Common myeloid progenitor, CD34-positive (primary cell): ENCODE measurements at regions of chr17 and their contacts with region 1.

Region 1: DNA sequence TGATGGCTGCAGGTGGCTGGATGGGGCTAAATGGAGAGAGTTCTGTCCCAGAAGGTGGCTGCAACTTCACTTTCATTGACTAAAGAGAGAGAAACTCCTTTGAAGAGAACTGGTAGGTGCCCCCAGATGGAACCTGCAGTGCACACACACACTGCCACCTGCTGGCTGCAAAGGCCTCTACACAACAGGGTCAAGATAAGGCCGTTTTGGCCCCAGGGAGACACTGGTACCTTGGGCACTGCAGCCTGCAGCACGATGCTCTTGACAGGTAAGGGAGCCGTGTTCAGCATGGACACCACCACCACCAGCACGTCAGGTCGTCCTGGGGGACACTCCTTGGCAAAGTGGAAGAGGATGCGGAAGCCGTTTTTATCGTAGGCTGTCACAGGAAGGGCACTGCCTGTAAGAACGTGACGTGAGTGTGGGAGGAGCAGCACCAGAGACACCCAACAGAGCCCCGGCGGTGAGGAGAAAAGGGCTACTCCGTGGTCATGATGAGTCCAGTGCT is 22.7 kb downstream of the GGA3 start:
- DNase-seq: peak; percentile 71 to 83 (median 81)
- H3K4me3 ChIP-seq: no peak overlapping the region
- H3K27ac ChIP-seq: no peak overlapping the region
- H3K4me1 ChIP-seq: no peaks in the 10 kb centered on the region
- H3K27me3 ChIP-seq: no peaks in the 10 kb centered on the region

Region 2: DNA sequence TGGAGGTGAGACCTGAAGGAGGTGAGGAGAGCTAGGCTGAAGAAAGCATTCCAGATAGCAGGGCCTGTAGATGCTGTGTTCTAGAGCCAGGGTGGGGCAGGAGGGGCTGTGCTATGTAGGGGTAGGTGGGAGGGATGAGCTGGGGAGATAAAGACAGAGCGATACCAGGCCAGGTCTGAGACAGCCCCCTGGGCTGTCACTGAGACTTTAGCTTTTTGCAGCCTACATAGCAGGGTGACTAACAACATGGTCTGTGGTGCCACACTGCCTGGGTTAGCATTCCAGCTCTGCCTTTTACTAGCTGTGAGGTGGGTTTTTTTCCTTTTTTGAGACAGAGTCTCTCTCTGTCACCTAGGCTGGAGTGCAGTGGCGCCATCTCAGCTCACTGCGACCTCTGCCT is 18.9 kb before region 1 on chr17:
- CTCF ChIA-PET with region 1: interaction called, 20 read pairs
- POLR2A ChIA-PET with region 1: interaction called, 6 read pairs
- DNase-seq: no peak
- H3K4me3 ChIP-seq: no peak overlapping the region
- H3K27ac ChIP-seq: no peak overlapping the region
- H3K4me1 ChIP-seq: no peaks in the 10 kb centered on the region
- H3K27me3 ChIP-seq: no peaks in the 10 kb centered on the region

Region 3: DNA sequence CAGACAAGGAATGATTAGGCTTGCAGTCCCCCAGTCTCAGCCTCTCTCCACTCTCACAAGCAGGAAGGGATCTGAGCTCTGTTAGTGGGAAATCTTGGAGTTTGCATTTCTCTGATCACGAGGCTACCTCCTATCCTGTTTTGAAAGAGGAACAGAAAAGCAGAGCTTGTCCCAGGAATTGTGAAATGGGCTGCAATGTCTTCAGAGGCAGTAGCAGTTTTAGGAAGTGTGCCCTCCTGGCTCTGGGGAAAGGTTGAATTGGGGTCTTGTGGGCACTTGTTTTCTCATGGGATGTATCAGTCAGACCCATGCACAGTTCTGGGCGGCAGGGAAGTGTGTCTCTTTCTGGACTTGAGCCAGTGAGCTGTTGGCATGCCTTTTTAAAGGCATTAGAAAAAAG is 10.4 kb before region 1 on chr17:
- CTCF ChIA-PET with region 1: interaction called, 50 read pairs
- POLR2A ChIA-PET with region 1: interaction called, 3 read pairs
- DNase-seq: no peak
- H3K4me3 ChIP-seq: no peak overlapping the region
- H3K27ac ChIP-seq: no peak overlapping the region
- H3K4me1 ChIP-seq: no peaks in the 10 kb centered on the region
- H3K27me3 ChIP-seq: no peaks in the 10 kb centered on the region

Region 4: DNA sequence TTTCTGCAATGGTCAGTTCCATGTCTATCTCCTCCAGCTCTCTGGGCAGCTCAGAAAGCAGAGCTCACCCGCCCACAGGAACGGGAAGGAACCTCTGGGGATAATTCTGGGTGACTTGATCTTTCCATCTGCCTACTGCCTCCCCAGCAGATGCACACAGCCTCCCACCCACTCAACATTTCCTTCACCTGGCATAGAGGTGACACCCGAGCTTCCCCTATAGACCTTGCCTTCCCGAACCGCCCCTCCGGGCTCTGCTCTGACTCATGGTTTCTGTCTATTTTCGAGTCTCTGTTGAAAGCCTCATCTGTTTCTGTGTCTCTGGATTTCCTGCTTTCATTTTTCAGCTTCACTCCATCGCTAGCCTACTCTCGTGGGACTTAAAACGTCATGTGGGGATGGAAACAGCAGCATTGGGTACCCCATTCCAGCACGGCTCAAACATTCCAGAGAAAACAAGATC is 11.3 kb after region 1 on chr17:
- CTCF ChIA-PET with region 1: interaction called, 27 read pairs
- POLR2A ChIA-PET with region 1: no interaction called
- DNase-seq: no peak
- H3K4me3 ChIP-seq: no peak overlapping the region
- H3K27ac ChIP-seq: no peak overlapping the region
- H3K4me1 ChIP-seq: peaks cover under 1 to 9% (median 7%) of the 10 kb centered on the region in 4 experiments
- H3K27me3 ChIP-seq: no peaks in the 10 kb centered on the region

Region 5: GRCh38 chr17:75261336-75262111 is 22.8 kb after region 1 on chr17 and contains the starts of genes GGA3 and MRPS7:
- CTCF ChIA-PET with region 1: interaction called, 35 read pairs
- POLR2A ChIA-PET with region 1: interaction called, 3 read pairs
- DNase-seq: peak; percentile 93 to 96 (median 95)
- H3K4me3 ChIP-seq: peak within 1 kb of the TSS; percentile 77 to 99 (median 91)
- H3K27ac ChIP-seq: peak within 1 kb of the TSS; percentile 99 to 100
- H3K4me1 ChIP-seq: peaks cover 10 to 39% (median 28%) of the 10 kb centered on the region in 4 experiments
- H3K27me3 ChIP-seq: no peaks in the 10 kb centered on the region

Region 6: GRCh38 chr17:75271233-75271954 is 32.7 kb after region 1 on chr17:
- CTCF ChIA-PET with region 1: interaction called, 17 read pairs
- POLR2A ChIA-PET with region 1: no interaction called
- DNase-seq: peak; percentile 61 to 84 (median 72)
- H3K4me3 ChIP-seq: peak overlapping the region; percentile 79 to 96 (median 91)
- H3K27ac ChIP-seq: peak overlapping the region in 1 of 2 experiments; percentile 64
- H3K4me1 ChIP-seq: peaks cover 0 to 53% (median 27%) of the 10 kb centered on the region in 4 experiments
- H3K27me3 ChIP-seq: no peaks in the 10 kb centered on the region